HepG2 (cell line): ENCODE measurements at regions of chr22 and their contacts with region 1.

Region 1: GRCh38 chr22:37118083-37118482 is 8.6 kb upstream of the TMPRSS6 start:
- DNase-seq: no peak
- ATAC-seq: no peak
- H3K4me3 ChIP-seq: no peak overlapping the region
- H3K27ac ChIP-seq: no peak overlapping the region
- H3K4me1 ChIP-seq: peaks cover 20% of the 10 kb centered on the region
- H3K27me3 ChIP-seq: peaks cover 3 to 22% of the 10 kb centered on the region in 2 experiments; a peak in 4 of 5 replicates
- CTCF ChIP-seq: no peak
- EP300 ChIP-seq: no peak
- POLR2A ChIP-seq: no peak
- RAD21 ChIP-seq: no peak

Region 2: DNA sequence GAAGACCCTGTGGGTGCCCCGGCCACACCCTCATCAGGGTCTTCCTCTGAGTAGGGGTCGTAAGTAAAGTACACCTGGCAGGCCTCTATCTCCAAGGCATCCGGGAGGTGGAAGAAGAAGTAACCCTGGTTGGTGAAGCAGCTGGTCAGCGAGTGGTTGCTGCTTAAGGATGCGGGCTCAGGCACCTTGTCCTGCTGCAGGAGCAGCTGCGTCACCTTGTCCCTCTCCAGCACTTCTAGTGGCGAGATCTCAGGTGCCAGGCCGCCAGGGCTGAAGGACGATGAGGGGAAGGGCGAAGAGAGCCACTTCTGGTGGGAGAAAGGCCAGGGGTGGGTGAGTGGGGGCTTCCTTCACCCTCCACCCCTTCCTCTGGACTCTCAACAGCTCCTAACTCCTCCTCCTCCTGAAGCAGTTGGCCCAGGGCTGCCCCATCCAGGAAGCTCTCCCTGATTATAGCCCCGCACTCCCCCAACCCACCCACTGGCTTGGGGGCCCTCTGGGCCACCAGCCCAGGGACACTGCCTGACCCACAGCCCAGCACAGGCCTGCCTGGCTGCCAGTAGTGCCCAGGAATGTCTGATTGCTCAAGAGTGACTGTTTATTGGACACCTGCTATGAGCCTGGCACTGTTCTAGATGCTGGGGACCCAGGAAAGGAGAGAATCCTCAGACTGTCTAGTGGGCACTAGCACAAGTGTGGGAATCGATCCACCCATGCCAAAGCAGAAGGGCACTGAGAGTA is 10.6 kb after region 1 on chr22:
- CTCF ChIA-PET with region 1: no interaction called
- POLR2A ChIA-PET with region 1: no interaction called
- in situ Hi-C with region 1: no loop called
- intact Hi-C with region 1: loop called (anchors 1 kb)
- DNase-seq: no peak
- ATAC-seq: no peak
- H3K4me3 ChIP-seq: no peak overlapping the region
- H3K27ac ChIP-seq: no peak overlapping the region
- H3K4me1 ChIP-seq: 0 out of 2 replicates have a peak, but pooled peaks cover 9% of the 10 kb centered on the region
- H3K27me3 ChIP-seq: peaks cover 3 to 16% of the 10 kb centered on the region in 2 experiments; a peak in 4 of 5 replicates
- CTCF ChIP-seq: no peak
- EP300 ChIP-seq: no peak
- POLR2A ChIP-seq: no peak
- RAD21 ChIP-seq: no peak

Region 3: DNA sequence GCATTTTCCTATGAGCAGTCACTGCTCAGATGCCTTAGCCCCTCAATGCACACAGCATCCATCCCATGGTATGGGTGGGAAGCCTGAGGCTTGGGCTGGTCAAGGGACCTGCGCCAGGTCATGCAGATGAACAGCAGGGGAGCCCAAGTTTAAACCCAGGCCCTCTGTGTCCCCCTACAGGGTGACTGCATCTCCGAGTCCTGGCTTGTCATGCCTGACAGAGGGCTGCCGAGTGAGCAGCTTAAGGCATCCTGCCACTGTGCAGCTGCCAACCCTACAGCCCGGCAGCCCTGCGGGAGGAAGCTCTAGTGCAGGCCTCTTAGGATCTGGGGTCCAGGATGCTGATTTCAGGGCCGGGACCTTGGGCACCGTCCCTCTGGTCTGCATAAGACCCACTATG is 21.7 kb after region 1 on chr22:
- CTCF ChIA-PET with region 1: no interaction called
- POLR2A ChIA-PET with region 1: no interaction called
- in situ Hi-C with region 1: no loop called
- intact Hi-C with region 1: no loop called
- DNase-seq: no peak
- ATAC-seq: peak; percentile 70
- H3K4me3 ChIP-seq: no peak overlapping the region
- H3K27ac ChIP-seq: no peak overlapping the region
- H3K4me1 ChIP-seq: no peaks in the 10 kb centered on the region
- H3K27me3 ChIP-seq: peaks cover 7 to 42% of the 10 kb centered on the region in 2 experiments; a peak in 4 of 5 replicates
- CTCF ChIP-seq: peak; percentile 31; the same call in 1 of the 2 replicates
- EP300 ChIP-seq: no peak
- POLR2A ChIP-seq: no peak
- RAD21 ChIP-seq: no peak

Region 4: GRCh38 chr22:37166675-37167066 is 48.6 kb after region 1 on chr22:
- CTCF ChIA-PET with region 1: no interaction called
- POLR2A ChIA-PET with region 1: no interaction called
- in situ Hi-C with region 1: no loop called
- intact Hi-C with region 1: no loop called
- DNase-seq: peak; percentile 42
- ATAC-seq: peak; percentile 87
- H3K4me3 ChIP-seq: peak overlapping the region in 1 of 3 experiments; percentile 44; a peak in 1 of 6 replicates
- H3K27ac ChIP-seq: no peak overlapping the region
- H3K4me1 ChIP-seq: peaks cover 42% of the 10 kb centered on the region
- H3K27me3 ChIP-seq: peaks cover 6 to 18% of the 10 kb centered on the region in 2 experiments; a peak in 3 of 5 replicates
- CTCF ChIP-seq: peak; percentile 96
- EP300 ChIP-seq: no peak
- POLR2A ChIP-seq: no peak
- RAD21 ChIP-seq: peak; percentile 81